A673 (cell line): ENCODE measurements at regions of chr21 and their contacts with region 1.

Region 1: DNA sequence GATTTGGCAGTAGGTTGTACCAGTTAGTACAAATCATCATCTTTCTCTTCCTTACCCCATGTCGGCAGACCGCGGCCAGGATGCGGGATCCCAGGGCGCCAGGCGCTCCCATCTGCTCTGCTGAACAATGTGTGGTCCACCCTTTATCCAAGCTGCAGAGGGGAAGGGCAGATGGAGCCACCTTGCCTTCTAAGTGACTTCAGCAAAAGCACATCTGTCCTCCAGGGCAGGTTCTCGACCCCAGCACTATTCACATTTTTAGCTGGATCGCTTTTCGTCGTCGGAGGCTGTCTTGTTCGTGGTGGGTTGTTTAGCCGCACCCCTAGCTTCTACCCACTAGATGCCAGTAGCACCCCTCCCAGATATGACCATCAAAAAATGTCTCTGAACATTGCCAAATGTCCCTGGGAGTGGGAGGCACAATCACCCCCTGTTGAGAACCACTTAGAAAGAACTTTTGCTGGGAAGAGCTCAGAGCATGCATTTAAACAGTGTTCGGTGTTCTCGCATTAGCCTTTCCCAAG is 58.1 kb upstream of the SIM2 start:
- DNase-seq: peak; percentile 97
- H3K4me3 ChIP-seq: peak overlapping the region; percentile 24
- H3K27ac ChIP-seq: peak overlapping the region; percentile 96
- H3K4me1 ChIP-seq: peaks cover 38% of the 10 kb centered on the region
- H3K27me3 ChIP-seq: no peaks in the 10 kb centered on the region
- CTCF ChIP-seq: peak; percentile 70

Region 2: GRCh38 chr21:36419996-36420395 is 220.8 kb before region 1 on chr21:
- CTCF ChIA-PET with region 1: interaction called, 3 read pairs
- POLR2A ChIA-PET with region 1: no interaction called
- intact Hi-C with region 1: loop called (anchors 2 kb)
- DNase-seq: peak; percentile 90
- H3K4me3 ChIP-seq: no peak overlapping the region
- H3K27ac ChIP-seq: peak overlapping the region; percentile 52
- H3K4me1 ChIP-seq: peaks cover 27% of the 10 kb centered on the region
- H3K27me3 ChIP-seq: no peaks in the 10 kb centered on the region
- CTCF ChIP-seq: peak; percentile 86

Region 3: GRCh38 chr21:36504067-36505058 is 136.4 kb before region 1 on chr21:
- CTCF ChIA-PET with region 1: interaction called, 5 read pairs
- POLR2A ChIA-PET with region 1: no interaction called
- intact Hi-C with region 1: loop called (anchors 2 kb)
- DNase-seq: peak; percentile 72
- H3K4me3 ChIP-seq: no peak overlapping the region
- H3K27ac ChIP-seq: peak overlapping the region; percentile 29
- H3K4me1 ChIP-seq: peaks cover 37% of the 10 kb centered on the region
- H3K27me3 ChIP-seq: no peaks in the 10 kb centered on the region
- CTCF ChIP-seq: peak; percentile 86

Region 4: GRCh38 chr21:36630485-36631206 is 10.1 kb before region 1 on chr21:
- CTCF ChIA-PET with region 1: interaction called, 18 read pairs
- POLR2A ChIA-PET with region 1: no interaction called
- intact Hi-C with region 1: no loop called
- DNase-seq: peak; percentile 66
- H3K4me3 ChIP-seq: no peak overlapping the region
- H3K27ac ChIP-seq: no peak overlapping the region
- H3K4me1 ChIP-seq: no peaks in the 10 kb centered on the region
- H3K27me3 ChIP-seq: no peaks in the 10 kb centered on the region
- CTCF ChIP-seq: peak; percentile 90

Region 5: GRCh38 chr21:36718951-36719501 is 78.2 kb after region 1 on chr21:
- CTCF ChIA-PET with region 1: no interaction called
- POLR2A ChIA-PET with region 1: interaction called, 10 read pairs
- intact Hi-C with region 1: no loop called
- DNase-seq: no peak
- H3K4me3 ChIP-seq: no peak overlapping the region
- H3K27ac ChIP-seq: peak overlapping the region; percentile 68
- H3K4me1 ChIP-seq: peaks cover 52% of the 10 kb centered on the region
- H3K27me3 ChIP-seq: no peaks in the 10 kb centered on the region
- CTCF ChIP-seq: no peak

Region 6: GRCh38 chr21:36917471-36918158 is 276.8 kb after region 1 on chr21:
- CTCF ChIA-PET with region 1: interaction called, 12 read pairs
- POLR2A ChIA-PET with region 1: no interaction called
- intact Hi-C with region 1: loop called (anchors 2 kb)
- DNase-seq: peak; percentile 60
- H3K4me3 ChIP-seq: no peak overlapping the region
- H3K27ac ChIP-seq: no peak overlapping the region
- H3K4me1 ChIP-seq: peaks cover 9% of the 10 kb centered on the region
- H3K27me3 ChIP-seq: no peaks in the 10 kb centered on the region
- CTCF ChIP-seq: peak; percentile 72

Region 7: GRCh38 chr21:36976882-36977651 is 336.3 kb after region 1 on chr21:
- CTCF ChIA-PET with region 1: interaction called, 3 read pairs
- POLR2A ChIA-PET with region 1: no interaction called
- intact Hi-C with region 1: loop called (anchors 2 kb)
- DNase-seq: peak; percentile 90
- H3K4me3 ChIP-seq: no peak overlapping the region
- H3K27ac ChIP-seq: no peak overlapping the region
- H3K4me1 ChIP-seq: peaks cover 6% of the 10 kb centered on the region
- H3K27me3 ChIP-seq: no peaks in the 10 kb centered on the region
- CTCF ChIP-seq: peak; percentile 95